GM12878 (cell line): ENCODE measurements at regions of chr1 and their contacts with region 1.

Region 1: GRCh38 chr1:23591460-23592208 is 32.3 kb upstream of the ID3 start:
- DNase-seq: no peak
- ATAC-seq: peak; percentile 71
- H3K4me3 ChIP-seq: peak overlapping the region; percentile 9; the same call in 1 of the 2 replicates
- H3K27ac ChIP-seq: peak overlapping the region; percentile 93
- H3K4me1 ChIP-seq: peaks cover 72% of the 10 kb centered on the region
- H3K27me3 ChIP-seq: no peaks in the 10 kb centered on the region
- CTCF ChIP-seq: no peak
- EP300 ChIP-seq: peak; percentile 80 to 81; a peak in 3 of 4 replicates
- POLR2A ChIP-seq: peak; percentile 48; the same call in 1 of the 2 replicates
- RAD21 ChIP-seq: no peak

Region 2: GRCh38 chr1:23507507-23507906 is 84.1 kb before region 1 on chr1:
- CTCF ChIA-PET with region 1: no interaction called
- POLR2A ChIA-PET with region 1: no interaction called
- RAD21 ChIA-PET with region 1: no interaction called
- SMC1A ChIA-PET with region 1: no interaction called
- in situ Hi-C with region 1: no loop called
- intact Hi-C with region 1: no loop called
- DNase-seq: no peak
- ATAC-seq: no peak
- H3K4me3 ChIP-seq: no peak overlapping the region
- H3K27ac ChIP-seq: no peak overlapping the region
- H3K4me1 ChIP-seq: no peaks in the 10 kb centered on the region
- H3K27me3 ChIP-seq: no peaks in the 10 kb centered on the region
- CTCF ChIP-seq: no peak
- EP300 ChIP-seq: no peak
- POLR2A ChIP-seq: no peak
- RAD21 ChIP-seq: no peak

Region 3: DNA sequence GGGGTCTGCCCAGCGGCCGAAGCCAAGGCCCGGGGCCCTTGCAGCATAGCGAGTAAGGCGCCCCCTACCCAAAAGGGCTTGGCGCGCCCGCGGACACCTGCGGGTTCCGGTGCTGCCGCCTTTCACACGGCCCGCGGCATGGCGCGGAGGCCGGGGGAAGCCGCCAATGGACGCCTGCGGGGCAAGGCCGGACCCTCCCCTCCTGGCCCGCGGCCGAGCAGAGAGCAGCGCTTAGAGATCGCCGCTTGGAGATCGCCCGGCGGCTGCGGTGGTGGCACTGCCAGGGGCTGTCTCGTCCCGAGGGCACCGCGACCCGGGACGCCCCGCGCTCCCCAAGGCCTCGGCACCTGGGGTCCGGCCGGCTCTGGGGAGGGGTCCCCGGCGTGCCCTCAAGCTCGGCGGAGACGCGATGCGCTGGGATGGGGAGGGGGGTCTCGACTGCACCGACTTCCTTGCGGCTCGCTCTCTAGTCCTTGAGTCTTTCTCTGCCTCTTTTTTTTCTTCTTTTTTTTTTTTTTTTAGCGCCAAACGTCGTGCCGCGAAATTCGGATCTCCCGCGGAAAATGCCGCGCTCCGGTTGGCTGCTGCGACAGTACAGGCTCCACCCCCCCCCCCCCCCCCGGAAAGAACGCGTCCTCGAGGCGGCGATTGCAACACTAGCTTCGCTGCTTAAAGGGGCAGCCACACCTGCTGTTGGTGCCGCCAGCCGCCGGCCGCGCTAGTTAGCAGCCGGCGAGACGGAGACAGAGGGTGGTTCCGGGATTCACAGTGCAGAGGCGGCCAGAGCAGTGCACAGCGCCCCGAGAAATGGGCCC is 60.7 kb before region 1 on chr1 and contains the start of gene E2F2:
- CTCF ChIA-PET with region 1: interaction called, 4 read pairs
- POLR2A ChIA-PET with region 1: interaction called, 12 read pairs
- RAD21 ChIA-PET with region 1: interaction called, 3 read pairs
- SMC1A ChIA-PET with region 1: interaction called, 4 read pairs
- in situ Hi-C with region 1: no loop called
- intact Hi-C with region 1: no loop called
- DNase-seq: no peak
- ATAC-seq: peak; percentile 72
- H3K4me3 ChIP-seq: peak within 1 kb of the TSS; percentile 85
- H3K27ac ChIP-seq: peak within 1 kb of the TSS; percentile 89
- H3K4me1 ChIP-seq: peaks cover 64% of the 10 kb centered on the region
- H3K27me3 ChIP-seq: no peaks in the 10 kb centered on the region
- CTCF ChIP-seq: peak in 2 of 3 experiments; percentile 23 to 29; a peak in 3 of 6 replicates
- EP300 ChIP-seq: no peak
- POLR2A ChIP-seq: peak; percentile 66
- RAD21 ChIP-seq: no peak
- polyA plus RNA-seq, gene E2F2: 4.3 to 4.6 TPM

Region 4: DNA sequence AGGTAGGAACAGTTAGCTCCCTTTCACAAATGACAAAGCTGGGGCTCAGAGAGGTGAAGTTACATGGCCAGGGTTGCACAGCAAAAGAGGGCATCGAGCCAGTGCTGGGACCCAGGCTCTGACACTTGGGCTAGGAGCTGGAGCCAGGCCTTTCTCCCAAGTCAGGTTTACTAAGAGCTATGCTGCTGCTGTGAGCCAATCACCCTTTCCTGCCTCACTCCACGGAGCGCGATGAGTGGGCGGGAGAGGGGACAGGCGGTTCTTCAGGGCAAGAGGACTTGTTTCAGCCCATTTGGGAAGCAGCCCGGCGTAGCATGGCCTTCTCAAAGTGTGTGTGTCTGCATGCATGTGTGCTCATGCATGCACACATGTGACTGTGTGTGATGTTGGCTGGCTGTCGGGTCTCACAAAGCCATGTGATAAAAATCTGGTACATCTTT is 42.9 kb before region 1 on chr1:
- CTCF ChIA-PET with region 1: interaction called, 108 read pairs
- POLR2A ChIA-PET with region 1: interaction called, 206 read pairs
- RAD21 ChIA-PET with region 1: interaction called, 8 read pairs
- SMC1A ChIA-PET with region 1: interaction called, 29 read pairs
- in situ Hi-C with region 1: no loop called
- intact Hi-C with region 1: no loop called
- DNase-seq: no peak
- ATAC-seq: peak; percentile 52
- H3K4me3 ChIP-seq: no peak overlapping the region
- H3K27ac ChIP-seq: no peak overlapping the region
- H3K4me1 ChIP-seq: peaks cover 21% of the 10 kb centered on the region
- H3K27me3 ChIP-seq: no peaks in the 10 kb centered on the region
- CTCF ChIP-seq: no peak
- EP300 ChIP-seq: no peak
- POLR2A ChIP-seq: no peak
- RAD21 ChIP-seq: no peak

Region 5: GRCh38 chr1:23567996-23568607 is 23.5 kb before region 1 on chr1:
- CTCF ChIA-PET with region 1: interaction called, 10 read pairs
- POLR2A ChIA-PET with region 1: interaction called, 271 read pairs
- RAD21 ChIA-PET with region 1: interaction called, 252 read pairs
- SMC1A ChIA-PET with region 1: interaction called, 419 read pairs
- in situ Hi-C with region 1: no loop called
- intact Hi-C with region 1: no loop called
- DNase-seq: no peak
- ATAC-seq: peak; percentile 62
- H3K4me3 ChIP-seq: peak overlapping the region; percentile 62
- H3K27ac ChIP-seq: no peak overlapping the region
- H3K4me1 ChIP-seq: peaks cover 14% of the 10 kb centered on the region
- H3K27me3 ChIP-seq: no peaks in the 10 kb centered on the region
- CTCF ChIP-seq: no peak
- EP300 ChIP-seq: no peak
- POLR2A ChIP-seq: no peak
- RAD21 ChIP-seq: no peak

Region 6: DNA sequence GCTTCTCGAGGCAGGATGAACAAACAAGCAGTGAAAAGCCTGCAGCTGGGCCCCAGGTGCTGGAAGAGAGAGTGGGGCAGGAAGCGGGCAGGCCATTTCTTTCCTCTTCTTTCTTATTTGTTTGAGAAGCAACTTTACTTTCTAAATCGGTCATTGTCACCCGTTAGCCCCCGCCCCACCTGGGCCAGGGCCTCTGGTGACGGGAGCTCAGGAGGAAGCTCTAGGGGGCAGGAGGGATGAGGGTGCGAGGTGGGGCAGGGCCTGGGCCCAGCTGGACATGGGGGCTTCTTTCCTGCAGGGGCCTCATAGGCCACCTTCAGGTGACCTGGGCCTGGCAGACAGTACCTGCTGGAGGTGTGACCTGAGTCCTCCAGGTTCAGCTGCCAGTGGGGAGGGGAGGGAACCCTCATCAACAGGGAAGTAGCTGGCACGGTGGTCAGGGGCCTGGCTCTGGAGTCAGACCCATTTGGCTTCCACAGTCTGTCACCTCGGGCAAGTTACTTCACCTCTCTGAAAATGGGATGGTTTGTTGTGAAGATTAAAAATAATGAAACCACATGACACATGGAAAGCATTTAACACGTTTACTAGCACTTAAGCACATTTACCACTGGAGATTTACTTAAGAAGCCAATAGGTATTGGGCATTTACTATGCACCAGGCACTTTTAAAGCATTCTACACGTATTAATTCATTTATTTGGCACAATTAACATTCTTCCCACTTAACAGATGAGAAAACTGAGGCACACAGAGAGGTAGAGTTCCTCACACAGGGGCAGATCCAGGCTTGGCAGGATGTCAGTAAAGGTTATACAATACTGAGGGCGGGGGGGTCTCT is 21.8 kb after region 1 on chr1:
- CTCF ChIA-PET with region 1: interaction called, 6 read pairs
- POLR2A ChIA-PET with region 1: interaction called, 55 read pairs
- RAD21 ChIA-PET with region 1: interaction called, 26 read pairs
- SMC1A ChIA-PET with region 1: interaction called, 22 read pairs
- in situ Hi-C with region 1: no loop called
- intact Hi-C with region 1: no loop called
- DNase-seq: no peak
- ATAC-seq: peak; percentile 63
- H3K4me3 ChIP-seq: no peak overlapping the region; the same call in 1 of the 2 replicates
- H3K27ac ChIP-seq: peak overlapping the region; percentile 80
- H3K4me1 ChIP-seq: peaks cover 37% of the 10 kb centered on the region
- H3K27me3 ChIP-seq: no peaks in the 10 kb centered on the region
- CTCF ChIP-seq: 0 out of 6 replicates have a peak, but pooled peaks of 1 of the 3 experiments have one; percentile 9
- EP300 ChIP-seq: no peak
- POLR2A ChIP-seq: no peak
- RAD21 ChIP-seq: no peak

Region 7: GRCh38 chr1:23619299-23620188 is 27.9 kb after region 1 on chr1:
- CTCF ChIA-PET with region 1: no interaction called
- POLR2A ChIA-PET with region 1: interaction called, 55 read pairs
- RAD21 ChIA-PET with region 1: interaction called, 26 read pairs
- SMC1A ChIA-PET with region 1: interaction called, 8 read pairs
- in situ Hi-C with region 1: no loop called
- intact Hi-C with region 1: no loop called
- DNase-seq: no peak
- ATAC-seq: peak; percentile 82
- H3K4me3 ChIP-seq: peak overlapping the region; percentile 64
- H3K27ac ChIP-seq: peak overlapping the region; percentile 51
- H3K4me1 ChIP-seq: peaks cover 36% of the 10 kb centered on the region
- H3K27me3 ChIP-seq: no peaks in the 10 kb centered on the region
- CTCF ChIP-seq: no peak
- EP300 ChIP-seq: peak; percentile 50 to 67; a peak in 1 of 4 replicates
- POLR2A ChIP-seq: peak; percentile 64
- RAD21 ChIP-seq: no peak

Region 8: GRCh38 chr1:23628951-23629387 is 37.3 kb after region 1 on chr1:
- CTCF ChIA-PET with region 1: interaction called, 94 read pairs
- POLR2A ChIA-PET with region 1: interaction called, 8 read pairs
- RAD21 ChIA-PET with region 1: interaction called, 36 read pairs
- SMC1A ChIA-PET with region 1: interaction called, 160 read pairs
- in situ Hi-C with region 1: no loop called
- intact Hi-C with region 1: no loop called
- DNase-seq: no peak
- ATAC-seq: peak; percentile 62
- H3K4me3 ChIP-seq: no peak overlapping the region
- H3K27ac ChIP-seq: no peak overlapping the region; the same call in 1 of the 2 replicates
- H3K4me1 ChIP-seq: peaks cover 44% of the 10 kb centered on the region
- H3K27me3 ChIP-seq: no peaks in the 10 kb centered on the region
- CTCF ChIP-seq: no peak
- EP300 ChIP-seq: no peak
- POLR2A ChIP-seq: no peak
- RAD21 ChIP-seq: no peak

Region 9: DNA sequence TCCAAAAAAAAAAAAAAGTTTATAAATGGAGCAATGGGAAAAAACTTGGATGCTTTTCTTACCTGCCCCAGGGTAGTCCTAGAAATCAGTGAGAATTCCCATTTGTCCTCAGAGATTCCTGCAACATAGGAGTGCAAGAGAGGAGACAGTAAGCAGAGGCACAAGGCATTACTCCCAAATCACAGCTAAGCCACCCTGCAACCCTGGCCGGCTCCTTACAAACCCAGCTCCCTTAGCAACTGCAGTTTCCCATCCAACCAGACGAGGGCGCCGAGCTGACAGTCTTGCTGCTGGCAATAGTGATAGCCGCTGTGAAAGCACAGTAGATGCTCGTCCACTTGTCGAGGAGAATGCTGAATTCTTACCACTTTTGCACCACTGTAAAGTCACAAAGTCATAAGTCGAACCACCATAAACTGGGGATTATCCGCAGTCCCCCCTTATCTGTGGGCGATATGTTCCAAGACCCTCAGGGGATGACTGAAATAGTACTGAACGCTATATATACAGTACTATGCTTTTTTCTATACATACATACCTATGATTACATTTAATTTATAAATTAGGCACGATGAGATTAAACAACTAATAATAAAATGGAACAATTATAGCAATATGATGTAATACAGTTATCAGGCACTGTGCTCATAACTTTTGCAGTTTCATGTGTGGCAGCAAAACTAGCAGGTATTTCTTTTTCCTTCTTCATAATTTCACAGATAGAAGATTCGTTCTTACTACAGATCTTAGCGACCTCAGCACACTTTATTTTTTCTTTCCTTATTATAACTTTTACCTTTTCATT is 180.6 kb after region 1 on chr1:
- CTCF ChIA-PET with region 1: no interaction called
- POLR2A ChIA-PET with region 1: no interaction called
- RAD21 ChIA-PET with region 1: no interaction called
- SMC1A ChIA-PET with region 1: no interaction called
- in situ Hi-C with region 1: no loop called
- intact Hi-C with region 1: no loop called
- DNase-seq: peak; percentile 27
- ATAC-seq: peak; percentile 99
- H3K4me3 ChIP-seq: no peak overlapping the region
- H3K27ac ChIP-seq: no peak overlapping the region
- H3K4me1 ChIP-seq: peaks cover 12% of the 10 kb centered on the region
- H3K27me3 ChIP-seq: no peaks in the 10 kb centered on the region
- CTCF ChIP-seq: peak; percentile 97 to 98 (median 98); a peak in 5 of 6 replicates
- EP300 ChIP-seq: no peak
- POLR2A ChIP-seq: no peak
- RAD21 ChIP-seq: peak; percentile 91